ENCODE measurements at regions of chr17 and their contacts with region 1.

Region 1: GRCh38 chr17:58517734-58518609 is 3.5 kb upstream of the MTMR4 start:
- DNase-seq: peak; percentile 100
- H3K4me3 Mint-ChIP-seq: peak overlapping the region; percentile 95
- H3K27ac Mint-ChIP-seq: peak overlapping the region; percentile 95
- H3K4me1 Mint-ChIP-seq: peaks cover 38% of the 10 kb centered on the region
- H3K27me3 Mint-ChIP-seq: no peaks in the 10 kb centered on the region

Region 2: DNA sequence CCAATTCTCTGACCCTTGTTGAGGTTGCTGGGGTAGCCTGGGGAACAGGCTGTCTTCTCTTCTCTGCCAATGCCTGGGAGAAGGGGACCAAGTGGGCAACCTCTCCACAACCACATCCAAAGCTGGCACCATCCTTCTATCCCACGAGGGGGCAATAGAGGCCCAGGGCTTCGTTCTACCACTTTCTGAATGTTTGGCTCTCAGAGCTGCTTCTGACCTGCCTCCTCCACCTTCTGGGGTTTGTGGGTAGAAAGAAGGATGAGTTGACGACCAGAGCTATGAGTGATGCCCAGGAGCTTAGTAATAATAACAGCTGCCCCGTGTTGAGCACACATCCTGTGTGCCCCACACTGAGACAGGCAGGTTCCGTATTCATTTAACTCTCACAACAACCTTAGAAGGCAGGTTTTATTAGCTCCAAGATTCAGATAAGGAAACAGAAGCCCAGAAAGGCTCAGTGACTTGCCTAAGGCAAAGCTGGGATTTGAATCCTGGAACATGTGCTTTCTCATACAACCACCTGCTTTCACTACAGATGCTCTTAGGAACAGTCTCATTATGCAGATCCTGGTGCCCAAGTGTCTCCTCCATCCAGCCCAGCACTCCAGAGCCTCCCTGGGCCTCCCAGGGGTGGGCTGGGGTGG is 200.4 kb before region 1 on chr17:
- CTCF ChIA-PET with region 1: interaction called, 8 read pairs
- intact Hi-C with region 1: loop called (anchors 1 kb)
- DNase-seq: peak; percentile 88
- H3K4me3 Mint-ChIP-seq: no peak overlapping the region
- H3K27ac Mint-ChIP-seq: peak overlapping the region; percentile 81
- H3K4me1 Mint-ChIP-seq: peaks cover 11% of the 10 kb centered on the region
- H3K27me3 Mint-ChIP-seq: no peaks in the 10 kb centered on the region

Region 3: DNA sequence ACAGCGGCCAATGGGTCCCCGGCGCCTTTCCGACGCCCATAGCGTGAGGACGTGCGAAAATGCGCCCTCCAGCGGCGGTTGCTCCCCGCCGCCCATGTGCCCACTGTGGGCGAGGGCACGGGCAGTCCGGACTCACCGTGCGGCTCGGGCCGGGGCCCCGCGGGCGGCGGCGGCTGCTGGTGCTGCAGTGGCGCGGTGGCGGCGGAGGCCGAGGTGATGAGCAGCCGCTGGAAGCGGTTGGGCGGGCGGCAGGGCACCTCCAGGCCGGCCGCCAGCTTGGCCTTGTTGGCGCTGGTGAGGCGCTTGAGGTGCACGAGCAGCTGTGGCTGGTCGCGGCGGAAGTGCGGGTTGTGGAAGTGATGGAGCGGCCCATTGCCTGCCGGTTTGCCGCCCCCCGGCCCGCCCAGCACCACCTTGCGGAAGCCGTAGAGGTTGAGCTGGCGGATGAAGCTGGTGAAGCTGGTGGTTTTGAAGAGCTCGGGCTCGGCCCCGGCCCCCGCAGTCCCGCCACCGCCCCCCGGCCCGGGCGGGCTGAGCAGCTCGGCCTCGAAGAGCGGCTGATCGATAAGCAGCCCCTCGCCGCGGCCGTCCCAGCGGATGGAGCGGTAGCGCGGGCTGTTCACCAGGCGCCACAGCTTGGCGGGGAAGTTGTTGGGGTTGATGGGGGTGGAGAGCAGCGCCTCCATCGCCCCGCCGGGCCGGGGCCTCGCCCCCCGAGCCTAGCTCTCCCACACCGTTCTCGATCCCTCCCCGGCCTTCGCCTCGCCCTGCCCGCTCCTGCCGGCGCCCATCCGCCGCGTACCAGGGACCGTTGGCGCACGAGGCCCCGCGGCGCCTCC is 30.2 kb before region 1 on chr17 and contains the start of gene HSF5:
- CTCF ChIA-PET with region 1: interaction called, 3 read pairs
- intact Hi-C with region 1: loop called (anchors 1 kb)
- DNase-seq: peak; percentile 79
- H3K4me3 Mint-ChIP-seq: peak within 1 kb of the TSS; percentile 58
- H3K27ac Mint-ChIP-seq: no peak within 1 kb of the TSS
- H3K4me1 Mint-ChIP-seq: peaks cover 15% of the 10 kb centered on the region
- H3K27me3 Mint-ChIP-seq: no peaks in the 10 kb centered on the region
- total RNA-seq, gene HSF5: 3.6 to 4.1 TPM

Region 4: DNA sequence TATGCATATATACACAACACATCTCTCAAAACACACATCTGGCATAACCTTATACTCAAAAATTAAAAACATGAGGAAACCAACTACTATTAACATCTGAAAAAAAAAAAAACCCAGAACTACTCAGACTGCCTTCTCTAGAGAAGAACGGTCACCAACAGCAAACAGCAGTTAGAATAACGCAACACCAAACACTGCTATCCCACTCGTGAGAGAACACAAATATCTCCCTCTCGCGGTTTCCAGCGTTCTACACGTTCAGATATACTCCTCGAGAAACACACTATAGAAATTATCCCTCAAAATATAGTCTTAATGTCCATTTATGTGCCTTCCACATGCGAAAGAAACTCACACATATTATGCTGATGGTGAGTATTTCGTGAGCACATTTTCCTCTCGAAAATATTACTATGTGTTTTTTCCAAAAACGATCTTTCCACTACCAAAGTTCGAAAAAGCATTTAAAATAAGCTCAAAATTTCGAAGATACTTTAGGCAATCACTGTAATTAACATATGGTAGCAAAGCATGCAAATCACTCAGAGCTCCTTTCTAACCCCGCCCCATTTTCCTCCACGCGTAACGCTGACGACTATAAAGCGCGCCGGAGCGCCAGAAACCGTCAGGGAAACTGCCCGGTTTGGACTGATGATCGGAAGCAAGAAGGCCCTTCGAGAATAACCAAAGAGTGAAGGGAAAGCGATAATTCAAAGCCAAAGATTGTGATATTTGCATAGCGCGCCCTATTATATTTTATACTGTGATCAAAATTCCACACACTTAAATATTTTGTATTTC is 113.8 kb after region 1 on chr17:
- CTCF ChIA-PET with region 1: interaction called, 3 read pairs
- intact Hi-C with region 1: loop called (anchors 1 kb)
- DNase-seq: peak; percentile 98
- H3K4me3 Mint-ChIP-seq: no peak overlapping the region
- H3K27ac Mint-ChIP-seq: no peak overlapping the region
- H3K4me1 Mint-ChIP-seq: peaks cover 3% of the 10 kb centered on the region
- H3K27me3 Mint-ChIP-seq: no peaks in the 10 kb centered on the region

Region 5: GRCh38 chr17:59004338-59005111 is 486.6 kb after region 1 on chr17:
- CTCF ChIA-PET with region 1: interaction called, 7 read pairs
- intact Hi-C with region 1: loop called (anchors 1 kb)
- DNase-seq: peak; percentile 86
- H3K4me3 Mint-ChIP-seq: no peak overlapping the region
- H3K27ac Mint-ChIP-seq: peak overlapping the region; percentile 61
- H3K4me1 Mint-ChIP-seq: peaks cover 28% of the 10 kb centered on the region
- H3K27me3 Mint-ChIP-seq: no peaks in the 10 kb centered on the region

Region 6: GRCh38 chr17:59435238-59435637 is 917.3 kb after region 1 on chr17:
- CTCF ChIA-PET with region 1: no interaction called
- intact Hi-C with region 1: loop called (anchors 1 kb)
- DNase-seq: no peak
- H3K4me3 Mint-ChIP-seq: no peak overlapping the region
- H3K27ac Mint-ChIP-seq: peak overlapping the region; percentile 57
- H3K4me1 Mint-ChIP-seq: peaks cover 37% of the 10 kb centered on the region
- H3K27me3 Mint-ChIP-seq: no peaks in the 10 kb centered on the region

Measured in activated naive CD4-positive, alpha-beta T cell treated with anti-CD3 and anti-CD28 coated beads for 36 hours (primary cell).